ENCODE measurements at regions of chr1 and their contacts with region 1.

Region 1: DNA sequence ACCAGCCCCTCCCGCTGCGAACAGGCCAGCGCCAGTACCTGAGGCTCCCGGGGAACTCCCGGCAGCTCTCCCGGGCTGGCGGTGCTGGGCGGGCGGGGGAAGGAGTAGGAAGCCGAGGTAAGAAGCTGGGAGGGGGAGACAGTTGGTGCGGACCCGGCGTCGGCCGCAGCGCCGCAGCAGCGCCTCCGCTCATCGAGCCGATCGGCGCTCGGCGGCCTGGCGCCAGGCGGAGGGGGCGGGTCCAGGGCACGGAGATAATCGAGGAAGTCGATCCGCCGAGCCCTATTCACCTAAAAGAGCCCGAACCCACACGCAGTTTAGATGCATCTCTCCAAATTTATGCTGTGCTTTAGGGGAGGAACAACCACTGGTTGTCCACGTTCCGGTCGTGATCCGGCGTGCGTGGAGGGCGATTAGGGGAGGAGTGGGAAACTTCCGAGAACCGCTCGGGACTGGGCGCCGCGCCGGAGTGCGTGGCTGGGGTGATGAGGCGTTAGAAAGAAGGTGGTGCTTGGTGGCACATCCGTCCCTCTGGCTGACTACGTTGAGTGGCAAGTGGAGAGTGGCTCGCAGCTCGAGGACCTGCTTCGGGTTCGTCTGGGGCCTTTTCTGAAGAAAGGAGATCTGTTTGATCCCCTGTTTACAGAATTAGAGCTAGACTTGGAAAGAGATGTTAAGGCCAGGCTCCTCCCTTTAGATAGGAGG is at the start of gene VAMP4:
- DNase-seq: peak; percentile 70 to 78
- H3K4me3 ChIP-seq: peak within 1 kb of the TSS; percentile 88
- H3K27ac ChIP-seq: peak within 1 kb of the TSS; percentile 88
- H3K4me1 ChIP-seq: peaks cover 29% of the 10 kb centered on the region
- H3K27me3 ChIP-seq: no peaks in the 10 kb centered on the region
- CTCF ChIP-seq: no peak
- total RNA-seq, gene VAMP4: 5.2 and 9.8 TPM in 2 replicates

Region 2: GRCh38 chr1:171781176-171781875 is 39.3 kb after region 1 on chr1 and contains the start of gene METTL13:
- CTCF ChIA-PET with region 1: no interaction called
- POLR2A ChIA-PET with region 1: interaction called, 5 read pairs
- intact Hi-C with region 1: loop called (anchors 1 kb)
- DNase-seq: peak; percentile 98 to 99
- H3K4me3 ChIP-seq: peak within 1 kb of the TSS; percentile 79
- H3K27ac ChIP-seq: peak within 1 kb of the TSS; percentile 72
- H3K4me1 ChIP-seq: peaks cover 22% of the 10 kb centered on the region
- H3K27me3 ChIP-seq: no peaks in the 10 kb centered on the region
- CTCF ChIP-seq: no peak
- total RNA-seq, gene METTL13: 32.2 and 35.9 TPM in 2 replicates

Region 3: DNA sequence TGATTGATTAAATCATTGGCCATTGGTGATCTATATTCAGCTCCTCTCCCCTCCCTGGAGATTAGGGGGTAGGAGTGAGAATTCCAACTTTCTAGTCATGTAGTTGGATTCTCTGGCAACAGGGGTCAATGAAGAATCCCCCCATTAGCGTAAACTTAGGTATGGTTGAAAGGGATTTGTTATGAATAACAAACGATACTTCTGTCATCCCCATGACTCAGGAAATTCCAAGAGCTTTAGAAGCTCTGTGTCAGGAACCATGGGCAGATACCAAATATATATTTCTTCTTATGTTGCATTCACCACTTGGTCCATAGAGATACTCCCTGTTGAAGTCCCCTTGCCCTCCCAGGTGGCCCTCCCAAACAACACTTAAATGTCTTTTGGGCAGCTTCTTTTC is 223.8 kb after region 1 on chr1:
- CTCF ChIA-PET with region 1: no interaction called
- POLR2A ChIA-PET with region 1: interaction called, 18 read pairs
- intact Hi-C with region 1: no loop called
- DNase-seq: no peak
- H3K4me3 ChIP-seq: no peak overlapping the region
- H3K27ac ChIP-seq: no peak overlapping the region
- H3K4me1 ChIP-seq: no peaks in the 10 kb centered on the region
- H3K27me3 ChIP-seq: no peaks in the 10 kb centered on the region
- CTCF ChIP-seq: no peak

Measured in PC-9 (cell line).